ENCODE measurements at regions of chr16 and their contacts with region 1.

Region 1: DNA sequence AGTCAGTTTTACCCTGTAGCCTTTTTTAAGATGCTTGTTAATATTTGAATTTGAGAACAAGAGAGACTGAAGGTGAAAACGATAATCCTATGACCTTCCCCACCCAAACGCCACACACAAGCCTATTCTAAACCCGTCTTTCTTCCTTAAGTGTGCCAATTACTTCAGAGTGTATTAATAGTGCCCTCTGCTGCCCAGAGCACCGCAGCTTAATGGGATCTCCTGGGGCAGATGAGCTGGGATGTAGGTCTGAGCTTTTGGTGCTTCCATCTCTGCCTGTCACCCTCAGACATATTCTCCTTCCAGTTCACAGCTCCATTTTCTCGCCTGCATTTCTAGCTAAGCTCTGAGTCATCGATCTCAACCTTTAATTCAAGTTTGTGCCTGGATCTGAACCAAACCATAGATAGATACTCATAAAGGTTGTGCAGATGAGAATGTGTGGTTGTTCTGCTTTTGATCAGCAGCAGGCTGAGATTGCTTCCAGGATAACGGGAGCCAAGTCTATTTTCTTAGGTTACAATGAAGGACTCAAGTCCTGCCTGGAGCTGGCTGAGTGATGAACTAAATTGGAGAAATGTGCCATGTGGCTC is 46.4 kb upstream of the CDH13 start:
- DNase-seq: no peak
- ATAC-seq: peak; percentile 71 to 80

Region 2: DNA sequence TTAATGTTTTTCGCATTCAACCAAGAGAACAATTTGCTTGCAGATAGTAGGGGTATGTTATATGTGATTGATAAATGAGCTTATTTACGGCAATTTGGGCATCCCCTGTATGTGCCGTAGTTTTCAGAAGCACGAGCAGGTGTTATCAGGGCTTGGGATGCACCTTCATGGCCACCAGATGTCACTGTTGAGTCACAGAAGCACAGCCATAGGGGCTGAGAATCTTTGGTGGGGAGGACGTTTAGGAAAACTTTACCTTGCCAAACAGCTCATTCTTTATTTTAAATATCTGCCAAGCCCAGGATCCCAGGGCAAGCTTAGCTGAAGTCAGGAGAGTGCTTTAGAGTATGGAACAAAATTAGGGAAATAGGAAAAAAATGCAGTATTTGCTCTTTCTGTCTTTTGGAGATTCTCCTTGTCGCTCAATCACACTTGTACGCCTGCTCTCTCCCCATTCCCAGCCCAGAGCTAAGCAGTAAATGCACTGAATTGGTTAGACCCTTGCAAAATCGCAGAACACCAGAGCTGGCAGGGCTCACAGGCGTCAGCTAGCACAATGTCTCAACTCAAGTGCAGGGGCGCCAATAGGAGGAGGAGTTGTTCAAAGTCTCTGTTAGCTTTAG is 316.8 kb before region 1 on chr16:
- intact Hi-C with region 1: loop called in 1 of 2 experiments (anchors 5 kb)
- DNase-seq: peak; percentile 46
- ATAC-seq: peak; percentile 89 to 92

Region 3: DNA sequence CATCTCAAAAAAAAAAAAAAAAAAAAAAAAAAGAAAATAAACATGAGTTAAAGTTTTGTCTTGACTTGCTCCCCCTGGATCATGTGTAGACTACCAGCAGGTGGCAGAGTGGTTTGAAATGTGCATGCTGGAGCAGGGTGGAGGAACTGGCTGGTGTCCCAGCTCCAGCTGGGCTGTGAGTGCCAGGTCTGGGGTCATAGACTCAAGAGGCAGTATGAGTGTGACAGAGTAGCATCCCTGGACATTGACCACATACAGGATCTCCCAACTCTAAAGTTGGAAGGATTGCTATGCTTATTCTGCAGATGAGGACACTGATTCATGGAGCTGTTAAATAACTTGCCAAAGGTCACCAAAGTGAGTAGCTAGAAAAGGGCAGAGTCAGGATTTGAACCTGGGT is 212.4 kb before region 1 on chr16:
- intact Hi-C with region 1: loop called in 1 of 2 experiments (anchors 1 kb)
- DNase-seq: peak; percentile 64
- ATAC-seq: peak; percentile 94 to 95

Region 4: GRCh38 chr16:82456683-82457082 is 123.7 kb before region 1 on chr16:
- intact Hi-C with region 1: loop called in 1 of 2 experiments (anchors 5 kb)
- DNase-seq: peak; percentile 51
- ATAC-seq: peak; percentile 80 to 89

Region 5: GRCh38 chr16:82509691-82510430 is 70.5 kb before region 1 on chr16:
- intact Hi-C with region 1: loop called in 1 of 2 experiments (anchors 10 kb)
- DNase-seq: no peak
- ATAC-seq: no peak

Region 6: DNA sequence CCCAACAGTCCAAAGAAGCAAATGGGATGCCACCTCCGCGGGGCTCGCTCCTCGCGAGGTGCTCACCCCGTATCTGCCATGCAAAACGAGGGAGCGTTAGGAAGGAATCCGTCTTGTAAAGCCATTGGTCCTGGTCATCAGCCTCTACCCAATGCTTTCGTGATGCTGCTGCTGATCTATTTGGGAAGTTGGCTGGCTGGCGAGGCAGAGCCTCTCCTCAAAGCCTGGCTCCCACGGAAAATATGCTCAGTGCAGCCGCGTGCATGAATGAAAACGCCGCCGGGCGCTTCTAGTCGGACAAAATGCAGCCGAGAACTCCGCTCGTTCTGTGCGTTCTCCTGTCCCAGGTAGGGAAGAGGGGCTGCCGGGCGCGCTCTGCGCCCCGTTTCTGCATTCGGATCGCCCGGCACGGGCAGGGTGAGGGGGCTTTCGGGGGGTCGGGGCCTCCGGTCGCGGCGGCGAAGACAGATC is 46.4 kb after region 1 on chr16 and contains the start of gene CDH13:
- intact Hi-C with region 1: no loop called
- DNase-seq: peak; percentile 62
- ATAC-seq: peak; percentile 53 to 68
- total RNA-seq, gene CDH13: 68.6 to 100 TPM

Region 7: DNA sequence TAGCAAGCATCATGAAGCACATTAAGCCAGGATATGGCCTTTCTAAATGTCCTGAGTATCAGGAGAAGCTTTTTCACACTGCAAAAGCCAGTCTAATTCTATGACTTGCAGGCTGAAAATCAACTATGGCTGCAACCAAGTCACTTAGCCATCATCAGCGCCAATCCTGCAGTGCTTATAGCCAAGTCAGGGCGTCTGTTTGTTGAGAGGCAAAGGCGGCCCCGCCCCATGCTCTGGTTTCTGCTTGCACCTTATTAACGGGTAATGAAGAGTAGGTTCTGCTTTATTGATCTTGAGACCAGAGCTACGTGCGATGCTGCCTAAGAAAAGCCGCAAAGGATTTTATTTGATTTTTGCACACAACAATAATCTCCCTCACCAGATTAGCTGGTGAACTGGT is 134.8 kb after region 1 on chr16:
- intact Hi-C with region 1: no loop called
- DNase-seq: no peak
- ATAC-seq: peak in 1 of 2 donors; percentile 15

Measured in left cardiac atrium (tissue), 4 donors.